IMR-90 (cell line): ENCODE measurements at regions of chr3 and their contacts with region 1.

Region 1: GRCh38 chr3:108301695-108302404 is 5.5 kb downstream of the HHLA2 start:
- DNase-seq: peak; percentile 31
- ATAC-seq: no peak; the same call in 1 of the 2 replicates
- H3K4me3 ChIP-seq: no peak overlapping the region
- H3K27ac ChIP-seq: no peak overlapping the region
- H3K4me1 ChIP-seq: peaks cover 6% of the 10 kb centered on the region
- H3K27me3 ChIP-seq: no peaks in the 10 kb centered on the region
- CTCF ChIP-seq: no peak
- POLR2A ChIP-seq: no peak
- RAD21 ChIP-seq: no peak

Region 2: DNA sequence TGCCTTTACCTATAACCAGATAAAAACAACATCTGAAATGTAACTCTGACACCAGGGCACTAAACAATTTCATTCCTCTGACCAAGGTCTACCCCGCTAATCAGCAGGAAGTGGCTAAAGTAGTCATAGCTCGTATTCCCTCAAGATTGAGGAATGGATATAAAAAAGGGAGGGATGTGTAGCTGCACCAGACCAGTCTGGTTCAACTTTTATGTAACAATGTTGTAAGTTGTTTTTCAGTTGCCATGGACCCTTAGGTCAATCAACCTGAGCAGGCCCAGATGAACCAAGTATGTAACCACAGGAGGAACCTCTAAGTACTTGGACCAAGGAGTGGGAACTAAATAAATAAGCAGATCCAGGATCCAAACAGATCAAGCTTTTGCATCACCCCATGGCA is 51.2 kb before region 1 on chr3:
- CTCF ChIA-PET with region 1: no interaction called
- POLR2A ChIA-PET with region 1: no interaction called
- dilution Hi-C with region 1: no loop called
- in situ Hi-C with region 1: no loop called
- intact Hi-C with region 1: no loop called
- DNase-seq: no peak
- ATAC-seq: no peak
- H3K4me3 ChIP-seq: no peak overlapping the region
- H3K27ac ChIP-seq: no peak overlapping the region
- H3K4me1 ChIP-seq: no peaks in the 10 kb centered on the region
- H3K27me3 ChIP-seq: no peaks in the 10 kb centered on the region
- CTCF ChIP-seq: no peak
- POLR2A ChIP-seq: no peak
- RAD21 ChIP-seq: no peak

Region 3: DNA sequence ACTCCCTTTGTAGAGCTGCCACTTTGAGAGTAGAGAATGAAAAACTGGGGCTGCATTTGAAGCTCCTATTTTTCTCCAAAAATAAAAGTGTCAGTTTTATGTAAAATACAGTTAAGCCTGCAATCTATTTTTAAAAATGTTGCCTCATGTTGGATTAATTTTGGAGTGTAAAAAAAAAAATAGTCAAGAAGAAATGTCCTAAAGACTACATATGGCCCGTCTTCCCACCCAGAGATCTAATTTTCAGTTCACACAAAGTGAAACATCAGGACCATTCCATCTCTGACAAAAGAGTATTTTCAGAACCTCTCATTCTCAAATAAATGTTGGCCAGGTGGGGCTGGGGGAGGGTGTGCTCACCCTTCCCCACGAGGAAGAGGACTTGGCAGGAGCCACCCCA is 57.2 kb after region 1 on chr3:
- CTCF ChIA-PET with region 1: no interaction called
- POLR2A ChIA-PET with region 1: no interaction called
- dilution Hi-C with region 1: no loop called
- in situ Hi-C with region 1: no loop called
- intact Hi-C with region 1: loop called (anchors 10 kb)
- DNase-seq: no peak
- ATAC-seq: no peak
- H3K4me3 ChIP-seq: no peak overlapping the region
- H3K27ac ChIP-seq: no peak overlapping the region
- H3K4me1 ChIP-seq: no peaks in the 10 kb centered on the region
- H3K27me3 ChIP-seq: peaks cover 4% of the 10 kb centered on the region
- CTCF ChIP-seq: no peak
- POLR2A ChIP-seq: no peak
- RAD21 ChIP-seq: no peak